ENCODE measurements at regions of chr15 and their contacts with region 1.

Region 1: DNA sequence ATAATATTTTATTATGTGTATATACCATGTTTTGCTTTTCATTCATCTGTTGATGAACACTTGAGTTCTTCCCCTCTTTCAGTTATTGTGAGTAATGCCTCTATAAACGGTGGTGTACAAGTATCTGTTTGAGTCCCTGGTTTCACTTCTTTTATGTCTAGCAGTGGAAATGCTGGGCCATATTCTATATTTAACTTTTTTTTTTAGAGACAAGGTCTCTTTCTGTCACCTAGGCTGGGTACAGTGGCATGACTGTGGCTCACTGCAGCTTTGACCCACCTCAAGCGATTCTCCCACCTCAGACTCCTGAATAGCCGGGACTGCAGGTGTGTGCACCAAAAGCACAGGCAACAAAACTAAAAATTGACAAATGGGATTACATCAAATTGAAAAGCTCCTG is 19.9 kb downstream of the GOLM2 start:
- DNase-seq: no peak
- H3K4me3 Mint-ChIP-seq: peak overlapping the region; percentile 69
- H3K27ac Mint-ChIP-seq: peak overlapping the region; percentile 93
- H3K4me1 Mint-ChIP-seq: peaks cover 43% of the 10 kb centered on the region
- H3K27me3 Mint-ChIP-seq: no peaks in the 10 kb centered on the region

Region 2: GRCh38 chr15:43977072-43977884 is 331.1 kb before region 1 on chr15:
- intact Hi-C with region 1: loop called (anchors 2 kb)
- DNase-seq: peak; percentile 55
- H3K4me3 Mint-ChIP-seq: no peak overlapping the region
- H3K27ac Mint-ChIP-seq: peak overlapping the region; percentile 70
- H3K4me1 Mint-ChIP-seq: peaks cover 41% of the 10 kb centered on the region
- H3K27me3 Mint-ChIP-seq: peaks cover 12% of the 10 kb centered on the region

Region 3: GRCh38 chr15:44157685-44158099 is 150.7 kb before region 1 on chr15:
- intact Hi-C with region 1: no loop called
- DNase-seq: no peak
- H3K4me3 Mint-ChIP-seq: no peak overlapping the region
- H3K27ac Mint-ChIP-seq: no peak overlapping the region
- H3K4me1 Mint-ChIP-seq: no peaks in the 10 kb centered on the region
- H3K27me3 Mint-ChIP-seq: peaks cover 11% of the 10 kb centered on the region

Region 4: DNA sequence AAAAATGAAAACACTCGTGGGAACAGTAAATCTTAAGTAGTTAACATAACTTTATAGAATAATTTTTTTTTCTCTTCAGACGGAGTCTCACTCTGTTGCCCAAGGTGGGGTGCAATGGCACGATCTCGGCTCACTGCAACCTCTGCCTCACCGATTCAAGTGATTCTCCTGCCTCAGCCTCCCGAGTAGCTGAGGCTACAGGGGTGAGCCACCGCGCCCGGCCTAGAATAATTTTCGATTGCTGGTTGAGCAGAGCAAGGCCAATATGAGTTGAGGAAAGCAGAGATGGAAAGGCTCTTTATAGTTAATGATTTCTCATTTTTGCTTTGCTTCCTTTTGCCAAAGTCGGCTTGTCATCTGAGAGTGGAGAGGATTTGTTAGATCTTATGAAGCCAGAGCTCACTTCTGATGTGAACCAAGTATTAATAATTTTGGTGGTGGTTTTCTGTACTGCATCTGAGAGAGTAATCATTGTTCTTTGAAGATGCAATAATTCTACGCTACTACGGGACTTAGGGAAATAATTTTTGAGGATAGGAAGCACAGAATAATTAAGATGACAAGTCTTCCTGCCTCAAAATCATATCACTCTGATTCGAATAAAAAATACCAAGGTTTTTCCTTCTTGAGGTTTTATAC is 21.5 kb before region 1 on chr15:
- intact Hi-C with region 1: loop called (anchors 1 kb)
- DNase-seq: no peak
- H3K4me3 Mint-ChIP-seq: peak overlapping the region; percentile 92
- H3K27ac Mint-ChIP-seq: peak overlapping the region; percentile 100
- H3K4me1 Mint-ChIP-seq: peaks cover 44% of the 10 kb centered on the region
- H3K27me3 Mint-ChIP-seq: peaks cover 9% of the 10 kb centered on the region

Region 5: DNA sequence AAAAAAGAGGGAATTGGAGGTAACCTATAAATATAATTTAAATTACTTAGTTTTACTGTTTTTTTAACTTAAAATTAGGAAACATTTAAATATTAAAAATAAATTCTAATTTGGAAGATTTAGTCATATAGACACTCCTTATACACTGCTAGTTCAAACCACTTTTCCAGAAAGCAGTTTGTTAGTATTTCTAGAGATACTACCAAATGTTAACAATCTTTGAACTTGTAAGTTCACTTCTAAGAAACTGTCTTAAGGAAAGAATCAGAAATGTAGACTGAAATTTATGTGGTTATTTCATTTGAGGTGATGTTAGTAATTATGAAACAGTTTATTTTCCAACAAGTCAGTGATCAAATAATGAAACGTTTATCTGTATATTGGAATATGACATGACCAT is 141.8 kb after region 1 on chr15:
- intact Hi-C with region 1: loop called (anchors 2 kb)
- DNase-seq: no peak
- H3K4me3 Mint-ChIP-seq: no peak overlapping the region
- H3K27ac Mint-ChIP-seq: peak overlapping the region; percentile 40
- H3K4me1 Mint-ChIP-seq: peaks cover 12% of the 10 kb centered on the region
- H3K27me3 Mint-ChIP-seq: no peaks in the 10 kb centered on the region

Region 6: GRCh38 chr15:44501768-44502366 is 193.5 kb after region 1 on chr15:
- intact Hi-C with region 1: loop called (anchors 1 kb)
- DNase-seq: no peak
- H3K4me3 Mint-ChIP-seq: no peak overlapping the region
- H3K27ac Mint-ChIP-seq: no peak overlapping the region
- H3K4me1 Mint-ChIP-seq: peaks cover 22% of the 10 kb centered on the region
- H3K27me3 Mint-ChIP-seq: no peaks in the 10 kb centered on the region

Region 7: GRCh38 chr15:44545913-44546802 is 237.7 kb after region 1 on chr15:
- intact Hi-C with region 1: loop called (anchors 1 kb)
- DNase-seq: peak; percentile 31
- H3K4me3 Mint-ChIP-seq: peak overlapping the region; percentile 64
- H3K27ac Mint-ChIP-seq: peak overlapping the region; percentile 90
- H3K4me1 Mint-ChIP-seq: peaks cover 54% of the 10 kb centered on the region
- H3K27me3 Mint-ChIP-seq: no peaks in the 10 kb centered on the region